ENCODE measurements at regions of chr2 and their contacts with region 1.

Region 1: GRCh38 chr2:27380626-27381545 is at the start of gene ZNF513:
- DNase-seq: peak; percentile 94
- H3K4me3 Mint-ChIP-seq: peak within 1 kb of the TSS; percentile 86
- H3K27ac Mint-ChIP-seq: peak within 1 kb of the TSS; percentile 93
- H3K4me1 Mint-ChIP-seq: peaks cover 33% of the 10 kb centered on the region
- H3K27me3 Mint-ChIP-seq: no peaks in the 10 kb centered on the region

Region 2: DNA sequence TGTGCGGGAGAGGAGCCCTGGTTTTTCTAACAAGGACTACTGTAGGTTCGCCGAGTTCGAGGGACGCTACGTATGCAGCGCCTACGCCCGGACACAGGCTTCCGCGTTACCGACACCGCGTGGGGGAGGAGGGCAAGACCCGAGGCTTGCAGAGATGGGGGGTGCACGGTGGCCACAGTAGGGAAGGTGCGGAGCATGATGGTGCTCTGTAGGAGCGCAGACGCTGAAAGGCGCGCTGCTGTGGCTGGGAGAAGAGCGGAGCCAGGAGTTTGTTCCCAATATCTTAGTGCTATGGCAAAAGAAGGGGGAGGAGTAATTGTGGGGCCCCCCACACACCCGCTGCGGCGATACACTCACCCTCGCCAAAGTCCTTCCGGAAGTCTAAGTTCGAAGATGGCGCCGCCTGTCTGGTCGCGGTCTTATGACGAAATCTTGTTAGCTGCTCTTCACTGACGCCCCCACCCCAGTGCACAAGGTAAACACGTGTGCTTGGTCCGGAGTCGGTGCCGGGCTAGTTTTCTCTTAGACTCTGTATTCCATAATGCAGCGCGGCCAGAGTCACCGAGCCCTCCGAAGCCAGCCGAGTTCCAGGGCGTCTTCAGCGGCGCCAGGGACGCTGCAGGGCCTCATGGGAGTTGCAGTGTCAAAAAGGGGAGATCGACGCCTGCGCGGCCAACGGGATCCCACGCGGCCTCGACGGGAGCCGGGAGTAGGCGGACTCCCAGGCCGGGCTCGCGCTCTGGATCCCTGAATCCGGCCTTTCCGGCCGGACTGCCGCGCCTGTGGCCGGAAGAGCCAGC is 24.3 kb before region 1 on chr2 and contains the start of gene GTF3C2:
- CTCF ChIA-PET with region 1: no interaction called
- DNase-seq: peak; percentile 96
- H3K4me3 Mint-ChIP-seq: peak within 1 kb of the TSS; percentile 95
- H3K27ac Mint-ChIP-seq: peak within 1 kb of the TSS; percentile 97
- H3K4me1 Mint-ChIP-seq: peaks cover 57% of the 10 kb centered on the region
- H3K27me3 Mint-ChIP-seq: peaks cover 5% of the 10 kb centered on the region

Region 3: GRCh38 chr2:27370026-27370815 is 10.7 kb before region 1 on chr2 and contains the starts of genes EIF2B4 and SNX17:
- CTCF ChIA-PET with region 1: interaction called, 14 read pairs
- DNase-seq: peak; percentile 100
- H3K4me3 Mint-ChIP-seq: peak within 1 kb of the TSS; percentile 98
- H3K27ac Mint-ChIP-seq: peak within 1 kb of the TSS; percentile 93
- H3K4me1 Mint-ChIP-seq: peaks cover 52% of the 10 kb centered on the region
- H3K27me3 Mint-ChIP-seq: no peaks in the 10 kb centered on the region

Region 4: GRCh38 chr2:27400348-27401135 is 19.7 kb after region 1 on chr2:
- CTCF ChIA-PET with region 1: no interaction called
- DNase-seq: no peak
- H3K4me3 Mint-ChIP-seq: no peak overlapping the region
- H3K27ac Mint-ChIP-seq: peak overlapping the region; percentile 5
- H3K4me1 Mint-ChIP-seq: peaks cover 34% of the 10 kb centered on the region
- H3K27me3 Mint-ChIP-seq: no peaks in the 10 kb centered on the region

Measured in activated naive CD4-positive, alpha-beta T cell treated with anti-CD3 and anti-CD28 coated beads, Interleukin-2, amount 10 ng/mL, durations not matched to agents 7 days and 5 days (primary cell).